GM12878 (cell line): ENCODE measurements at regions of chr2 and their contacts with region 1.

Region 1: GRCh38 chr2:135985018-135985825 is at the start of gene DARS1:
- DNase-seq: peak; percentile 79
- ATAC-seq: peak; percentile 86
- H3K4me3 ChIP-seq: peak within 1 kb of the TSS; percentile 88
- H3K27ac ChIP-seq: peak within 1 kb of the TSS; percentile 95
- H3K4me1 ChIP-seq: peaks cover 8% of the 10 kb centered on the region
- H3K27me3 ChIP-seq: no peaks in the 10 kb centered on the region
- CTCF ChIP-seq: no peak
- EP300 ChIP-seq: peak in 1 of 2 experiments; percentile 31; a peak in 2 of 4 replicates
- POLR2A ChIP-seq: peak; percentile 95
- RAD21 ChIP-seq: no peak
- polyA plus RNA-seq, gene DARS1: 102 to 134 TPM

Region 2: DNA sequence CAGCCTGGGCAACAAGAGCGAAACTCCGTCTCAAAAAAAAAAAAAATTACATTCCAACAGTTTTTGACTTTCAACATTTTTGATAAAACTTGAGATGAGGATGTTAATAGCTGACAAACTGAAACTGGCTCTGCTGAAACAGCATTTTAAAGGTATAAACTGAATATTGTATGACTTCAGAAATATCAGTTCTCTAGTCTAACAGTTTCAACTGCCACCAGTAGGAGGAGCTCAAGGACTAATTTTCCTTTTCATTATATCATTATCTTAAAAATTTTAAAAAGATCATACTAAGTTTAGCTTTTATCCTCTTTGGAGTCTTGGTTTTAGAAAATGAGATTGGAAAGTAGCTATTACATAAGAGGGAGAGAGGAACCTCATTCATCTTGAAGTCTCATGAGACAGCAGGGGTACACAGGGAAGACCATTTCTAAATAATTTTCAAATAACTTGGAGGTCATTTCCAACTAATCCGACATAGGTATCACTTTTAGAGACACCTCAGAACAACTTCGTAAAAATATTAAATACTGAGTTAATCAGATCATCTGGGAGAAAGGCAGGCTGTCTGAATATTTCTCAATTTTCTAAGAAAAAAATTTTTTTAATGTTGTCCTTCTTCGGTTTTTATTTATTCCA is 71.4 kb before region 1 on chr2:
- CTCF ChIA-PET with region 1: interaction called, 11 read pairs
- POLR2A ChIA-PET with region 1: no interaction called
- RAD21 ChIA-PET with region 1: interaction called, 12 read pairs
- SMC1A ChIA-PET with region 1: interaction called, 14 read pairs
- in situ Hi-C with region 1: no loop called
- intact Hi-C with region 1: loop called (anchors 5 kb)
- DNase-seq: no peak
- ATAC-seq: peak; percentile 75
- H3K4me3 ChIP-seq: no peak overlapping the region
- H3K27ac ChIP-seq: no peak overlapping the region
- H3K4me1 ChIP-seq: no peaks in the 10 kb centered on the region
- H3K27me3 ChIP-seq: no peaks in the 10 kb centered on the region
- CTCF ChIP-seq: peak; percentile 58 to 68 (median 63); a peak in 5 of 6 replicates
- EP300 ChIP-seq: no peak
- POLR2A ChIP-seq: no peak
- RAD21 ChIP-seq: peak; percentile 75

Region 3: GRCh38 chr2:135948642-135949355 is 36.4 kb before region 1 on chr2:
- CTCF ChIA-PET with region 1: interaction called, 4 read pairs
- POLR2A ChIA-PET with region 1: interaction called, 4 read pairs
- RAD21 ChIA-PET with region 1: interaction called, 19 read pairs
- SMC1A ChIA-PET with region 1: interaction called, 14 read pairs
- in situ Hi-C with region 1: no loop called
- intact Hi-C with region 1: no loop called
- DNase-seq: no peak
- ATAC-seq: peak; percentile 81
- H3K4me3 ChIP-seq: no peak overlapping the region
- H3K27ac ChIP-seq: no peak overlapping the region
- H3K4me1 ChIP-seq: peaks cover 3% of the 10 kb centered on the region
- H3K27me3 ChIP-seq: no peaks in the 10 kb centered on the region
- CTCF ChIP-seq: no peak
- EP300 ChIP-seq: peak in 1 of 2 experiments; percentile 78; a peak in 1 of 4 replicates
- POLR2A ChIP-seq: no peak
- RAD21 ChIP-seq: no peak

Region 4: DNA sequence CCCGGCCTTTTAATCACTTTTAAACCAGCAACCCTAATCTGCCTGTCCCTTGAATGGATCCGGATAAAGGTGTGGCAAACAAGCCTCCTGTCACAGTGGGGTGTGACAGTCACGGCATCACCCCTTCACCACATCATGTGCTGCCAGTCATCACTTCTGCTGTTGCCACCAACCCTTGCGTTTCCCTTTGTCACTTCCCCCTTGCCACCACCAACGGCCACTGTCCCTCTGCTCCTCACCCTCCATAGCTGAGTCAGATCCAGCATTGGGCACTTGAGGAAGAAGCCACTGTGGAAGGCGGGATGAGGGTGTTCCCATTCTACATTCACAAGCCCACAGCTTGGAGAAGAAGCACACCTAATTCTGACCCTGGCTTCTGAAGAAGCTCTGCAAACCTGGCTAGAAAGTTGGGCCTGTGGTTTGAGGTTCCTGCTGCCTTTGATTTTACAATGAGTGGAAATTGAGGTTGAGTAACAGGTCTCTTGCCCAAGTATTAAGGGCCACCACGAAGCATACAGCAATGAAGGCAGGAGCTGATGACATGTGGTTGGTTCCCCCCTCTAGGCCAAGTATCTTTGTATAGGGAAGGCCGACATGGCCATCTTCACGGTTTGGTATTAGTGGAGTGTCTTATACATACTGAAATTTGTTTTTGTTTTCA is 23.1 kb after region 1 on chr2:
- CTCF ChIA-PET with region 1: interaction called, 9 read pairs
- POLR2A ChIA-PET with region 1: interaction called, 10 read pairs
- RAD21 ChIA-PET with region 1: interaction called, 45 read pairs
- SMC1A ChIA-PET with region 1: interaction called, 153 read pairs
- in situ Hi-C with region 1: no loop called
- intact Hi-C with region 1: no loop called
- DNase-seq: no peak
- ATAC-seq: peak; percentile 69
- H3K4me3 ChIP-seq: no peak overlapping the region
- H3K27ac ChIP-seq: no peak overlapping the region
- H3K4me1 ChIP-seq: peaks cover 9% of the 10 kb centered on the region
- H3K27me3 ChIP-seq: no peaks in the 10 kb centered on the region
- CTCF ChIP-seq: no peak
- EP300 ChIP-seq: peak in 1 of 2 experiments; percentile 33; a peak in 1 of 4 replicates
- POLR2A ChIP-seq: no peak
- RAD21 ChIP-seq: no peak

Region 5: DNA sequence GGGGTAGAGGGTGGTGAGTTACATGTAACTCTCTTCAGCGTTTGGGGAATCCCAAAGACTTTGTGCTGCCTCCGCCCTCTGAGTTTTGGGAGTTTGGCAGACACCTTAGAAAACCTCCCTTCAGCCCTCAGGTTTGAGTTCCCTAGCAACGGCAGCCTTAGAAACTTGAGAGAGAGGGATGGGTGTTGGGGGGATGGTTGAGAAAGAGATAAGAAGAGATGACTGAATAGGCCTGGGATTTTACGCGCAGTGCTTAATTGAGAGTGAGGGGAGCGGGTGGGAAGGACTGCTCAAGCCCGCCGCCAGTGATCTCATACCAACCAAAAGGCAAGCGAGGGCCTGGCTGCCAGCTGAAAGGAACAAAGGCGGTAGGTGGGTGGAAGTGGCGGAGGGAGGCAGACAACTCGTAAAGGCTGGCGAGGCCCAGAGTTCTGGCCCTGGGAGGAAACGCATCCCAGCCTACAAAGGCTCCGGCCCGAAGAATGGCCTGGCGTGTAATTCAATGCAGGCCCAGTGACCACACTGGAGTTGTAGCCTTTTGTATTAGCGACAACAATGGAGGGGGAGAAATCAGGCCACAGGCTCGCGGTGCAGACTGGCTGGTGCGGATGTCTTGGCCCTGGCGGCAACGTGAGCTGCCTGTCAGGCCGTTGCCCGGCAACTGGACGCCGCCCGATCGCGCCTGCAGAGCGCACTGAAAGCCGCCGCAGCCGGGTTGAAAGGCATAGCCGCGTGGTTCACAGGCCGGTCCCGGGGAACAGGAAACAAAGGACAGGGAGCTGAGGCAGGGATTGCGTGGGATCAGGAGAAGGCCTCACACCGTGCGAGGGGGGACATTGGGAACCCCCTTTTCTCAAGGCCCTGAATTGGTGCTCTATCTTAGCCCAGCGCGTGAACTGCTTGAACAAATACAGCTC is 40.1 kb after region 1 on chr2:
- CTCF ChIA-PET with region 1: interaction called, 7 read pairs
- POLR2A ChIA-PET with region 1: interaction called, 4 read pairs
- RAD21 ChIA-PET with region 1: interaction called, 12 read pairs
- SMC1A ChIA-PET with region 1: interaction called, 153 read pairs
- in situ Hi-C with region 1: no loop called
- intact Hi-C with region 1: no loop called
- DNase-seq: no peak
- ATAC-seq: peak; percentile 68
- H3K4me3 ChIP-seq: no peak overlapping the region
- H3K27ac ChIP-seq: no peak overlapping the region
- H3K4me1 ChIP-seq: peaks cover 7% of the 10 kb centered on the region; the same call in 1 of the 2 replicates
- H3K27me3 ChIP-seq: no peaks in the 10 kb centered on the region
- CTCF ChIP-seq: no peak
- EP300 ChIP-seq: no peak
- POLR2A ChIP-seq: no peak
- RAD21 ChIP-seq: no peak

Region 6: DNA sequence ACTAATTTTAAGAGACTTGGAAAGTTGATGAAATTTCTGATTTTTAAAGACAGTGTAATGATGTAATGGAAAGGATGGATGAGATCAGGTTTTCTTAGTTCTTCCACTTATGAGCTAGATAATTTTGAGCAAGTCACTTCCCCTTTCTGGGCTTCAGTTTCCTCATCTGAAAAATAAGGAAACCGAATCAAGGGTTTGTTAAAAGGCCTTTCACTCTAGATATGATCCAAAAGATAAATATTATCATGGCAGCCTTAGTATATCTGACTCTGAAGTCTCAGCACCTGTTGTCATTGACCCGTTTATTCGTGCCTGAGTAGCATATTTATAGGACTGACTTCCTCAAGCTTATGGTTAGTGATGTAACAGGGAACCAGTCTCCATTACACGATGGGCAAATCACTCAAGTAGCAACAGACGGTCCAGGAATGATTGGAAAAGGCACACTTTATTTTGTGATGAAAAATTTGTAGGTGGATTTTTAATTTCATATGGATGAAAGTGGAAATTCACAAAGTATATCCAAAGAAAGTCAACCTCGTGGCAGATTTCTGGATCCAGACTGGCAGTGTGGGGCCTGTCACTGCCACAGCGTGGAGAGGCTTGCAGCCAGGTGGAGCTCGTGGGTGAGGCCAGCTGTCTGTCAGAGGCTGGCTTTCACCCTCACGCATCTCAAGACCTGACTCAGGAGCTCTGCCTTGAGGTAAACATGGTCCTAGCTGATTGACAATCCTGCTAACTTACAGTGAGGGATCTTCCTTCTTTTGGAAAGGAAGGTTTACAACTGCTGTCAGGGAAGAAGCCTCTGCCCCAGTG is 270.6 kb after region 1 on chr2:
- CTCF ChIA-PET with region 1: no interaction called
- POLR2A ChIA-PET with region 1: interaction called, 3 read pairs
- RAD21 ChIA-PET with region 1: interaction called, 13 read pairs
- SMC1A ChIA-PET with region 1: interaction called, 8 read pairs
- in situ Hi-C with region 1: no loop called
- intact Hi-C with region 1: no loop called
- DNase-seq: no peak
- ATAC-seq: peak; percentile 78
- H3K4me3 ChIP-seq: no peak overlapping the region
- H3K27ac ChIP-seq: no peak overlapping the region
- H3K4me1 ChIP-seq: peaks cover 12% of the 10 kb centered on the region
- H3K27me3 ChIP-seq: no peaks in the 10 kb centered on the region; a peak in 1 of 4 replicates
- CTCF ChIP-seq: peak in 2 of 3 experiments; percentile 9 to 27; a peak in 3 of 6 replicates
- EP300 ChIP-seq: peak in 1 of 2 experiments; percentile 63; a peak in 1 of 4 replicates
- POLR2A ChIP-seq: no peak
- RAD21 ChIP-seq: no peak